Left cardiac atrium (tissue), 4 donors: ENCODE measurements at regions of chr11 and their contacts with region 1.

Region 1: DNA sequence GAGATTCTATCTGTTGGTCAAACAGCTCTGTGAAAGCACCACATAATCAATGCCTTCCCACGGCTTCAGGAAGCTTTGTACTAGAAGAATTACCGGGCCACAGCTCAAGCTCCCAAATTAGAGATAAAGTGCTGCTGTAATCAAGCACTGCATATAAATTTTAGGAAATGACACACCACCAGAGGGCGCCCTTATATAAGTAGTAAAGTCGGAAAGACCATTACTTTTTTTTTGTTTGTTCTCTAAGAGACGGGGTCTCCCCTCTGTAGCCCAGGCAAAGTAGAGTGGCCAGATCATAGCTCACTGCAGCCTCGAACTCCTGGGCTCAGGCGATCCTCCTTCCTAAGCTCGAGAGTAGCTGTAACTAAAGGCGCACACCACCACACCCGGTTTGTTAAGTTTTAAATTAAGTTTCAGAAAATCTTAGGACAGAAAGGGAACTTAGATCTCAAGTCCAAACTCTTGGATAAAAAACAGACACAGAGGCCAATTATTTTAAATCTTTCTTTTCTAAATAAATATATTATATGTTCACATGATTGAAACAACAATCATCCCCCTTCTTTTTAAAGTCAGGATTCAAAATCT is 32.6 kb downstream of the PRCP start:
- DNase-seq: peak; percentile 82
- ATAC-seq: peak; percentile 45 to 53

Region 2: DNA sequence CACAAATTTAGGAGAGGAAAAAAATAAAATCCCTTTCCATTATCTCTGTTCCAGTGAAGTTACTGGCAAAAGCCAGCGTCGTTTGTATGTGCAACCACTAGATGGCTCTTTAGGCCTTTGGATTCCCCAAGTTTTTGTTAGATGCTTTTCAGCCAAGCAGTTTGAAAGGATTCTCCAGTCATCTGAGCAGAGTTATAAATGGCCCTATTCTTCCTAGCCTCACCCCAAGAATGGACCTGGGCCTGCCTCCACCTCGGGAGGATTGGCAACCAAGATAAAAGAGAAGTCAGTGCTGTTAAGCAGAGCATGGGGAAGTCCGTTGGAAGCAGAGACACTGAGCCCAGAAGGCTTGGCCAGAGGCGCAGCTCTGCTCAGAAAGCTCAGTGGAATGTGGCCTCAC is 149.3 kb before region 1 on chr11:
- intact Hi-C with region 1: loop called in 1 of 2 experiments (anchors 10 kb)
- DNase-seq: no peak
- ATAC-seq: peak; percentile 74 to 77

Region 3: GRCh38 chr11:82733444-82734119 is 134.0 kb before region 1 on chr11 and contains the start of gene FAM181B:
- intact Hi-C with region 1: loop called in 1 of 2 experiments (anchors 5 kb)
- DNase-seq: peak; percentile 73
- ATAC-seq: peak; percentile 89 to 93
- total RNA-seq, gene FAM181B: 1.7 to 2.0 TPM

Region 4: DNA sequence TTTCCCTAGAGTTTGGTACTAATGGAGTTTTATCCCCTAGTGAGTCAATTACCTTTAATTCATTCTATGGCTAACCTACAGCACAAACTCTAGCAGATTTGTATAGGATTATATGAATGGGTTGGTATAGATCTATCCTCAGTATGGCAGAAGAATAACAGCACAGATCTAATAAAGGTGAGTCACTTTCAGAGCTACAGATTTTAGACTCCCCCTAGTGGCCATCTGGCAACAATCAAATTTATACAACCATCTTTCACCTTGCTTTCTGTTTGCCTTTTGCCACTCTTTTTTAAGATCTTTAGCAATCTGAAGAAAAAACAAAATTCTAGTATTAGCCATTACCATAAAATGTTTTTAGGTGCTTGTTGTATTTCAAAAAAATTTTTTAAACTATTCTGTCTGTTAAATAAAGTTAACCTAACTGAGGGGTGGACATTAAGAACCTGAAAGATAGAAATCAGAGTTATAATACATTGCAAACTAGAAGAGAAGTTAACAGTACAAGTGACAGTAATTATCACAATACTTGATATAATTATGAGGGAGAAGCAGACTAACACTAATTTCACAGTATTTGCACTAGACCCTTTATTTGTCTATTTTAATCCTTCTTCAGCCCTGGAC is 59.8 kb after region 1 on chr11:
- intact Hi-C with region 1: loop called in 1 of 2 experiments (anchors 10 kb)
- DNase-seq: no peak
- ATAC-seq: peak; percentile 41 to 50

Region 5: GRCh38 chr11:82945682-82946081 is 78.1 kb after region 1 on chr11:
- intact Hi-C with region 1: no loop called
- DNase-seq: no peak
- ATAC-seq: no peak